Mammary epithelial cell (primary cell): ENCODE measurements at regions of chr17 and their contacts with region 1.

Region 1: GRCh38 chr17:82230627-82231311 is 1.9 kb downstream of the SLC16A3 start:
- DNase-seq: peak; percentile 78
- H3K4me3 ChIP-seq: peak overlapping the region; percentile 47 to 76 (median 75)
- H3K27ac ChIP-seq: peak overlapping the region; percentile 32
- H3K4me1 ChIP-seq: peaks cover 54% of the 10 kb centered on the region
- H3K27me3 ChIP-seq: no peaks in the 10 kb centered on the region
- CTCF ChIP-seq: peak; percentile 10 to 42

Region 2: GRCh38 chr17:82030470-82031302 is 200.1 kb before region 1 on chr17:
- CTCF ChIA-PET with region 1: no interaction called
- dilution Hi-C with region 1: no loop called
- in situ Hi-C with region 1: no loop called
- intact Hi-C with region 1: loop called (anchors 1 kb)
- DNase-seq: peak; percentile 58
- H3K4me3 ChIP-seq: peak overlapping the region; percentile 35 to 58 (median 42)
- H3K27ac ChIP-seq: no peak overlapping the region
- H3K4me1 ChIP-seq: peaks cover 18% of the 10 kb centered on the region
- H3K27me3 ChIP-seq: no peaks in the 10 kb centered on the region
- CTCF ChIP-seq: peak; percentile 78 to 80

Region 3: DNA sequence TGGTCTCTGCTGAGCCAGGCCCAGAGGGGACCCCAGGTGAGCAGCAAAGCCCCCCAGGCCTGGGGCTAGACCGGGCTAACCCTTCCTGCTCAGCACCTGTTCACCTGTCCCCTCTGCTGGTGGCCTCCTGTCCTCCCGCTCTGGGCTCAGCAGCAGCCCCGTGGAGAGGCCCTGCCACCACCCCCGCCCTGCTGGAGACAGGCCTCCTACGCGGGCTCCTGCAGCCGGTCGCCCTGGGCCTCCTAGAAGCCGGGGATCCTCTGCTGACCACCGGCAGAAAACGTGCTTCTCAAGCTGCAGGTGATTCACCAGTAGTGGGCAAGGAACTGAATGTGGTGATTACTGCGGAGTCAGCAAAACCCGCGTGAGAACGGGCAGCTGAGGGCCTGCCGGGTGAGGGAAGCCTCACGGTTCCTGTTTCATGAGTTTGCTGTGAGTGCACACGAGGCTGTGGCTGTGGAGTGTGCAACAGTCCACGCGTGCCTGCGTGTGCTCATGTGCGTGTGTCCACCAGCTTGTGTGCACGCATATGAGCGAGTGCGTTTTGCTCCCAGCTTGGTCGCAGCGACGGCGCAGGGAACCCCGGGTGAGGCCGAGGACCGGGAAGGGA is 102.0 kb after region 1 on chr17:
- CTCF ChIA-PET with region 1: no interaction called
- dilution Hi-C with region 1: no loop called
- in situ Hi-C with region 1: no loop called
- intact Hi-C with region 1: no loop called
- DNase-seq: peak; percentile 46
- H3K4me3 ChIP-seq: peak overlapping the region in 2 of 3 experiments; percentile 18 to 46
- H3K27ac ChIP-seq: no peak overlapping the region
- H3K4me1 ChIP-seq: peaks cover 46% of the 10 kb centered on the region
- H3K27me3 ChIP-seq: no peaks in the 10 kb centered on the region
- CTCF ChIP-seq: no peak